MCF 10A (cell line): ENCODE measurements at regions of chr12 and their contacts with region 1.

Region 1: DNA sequence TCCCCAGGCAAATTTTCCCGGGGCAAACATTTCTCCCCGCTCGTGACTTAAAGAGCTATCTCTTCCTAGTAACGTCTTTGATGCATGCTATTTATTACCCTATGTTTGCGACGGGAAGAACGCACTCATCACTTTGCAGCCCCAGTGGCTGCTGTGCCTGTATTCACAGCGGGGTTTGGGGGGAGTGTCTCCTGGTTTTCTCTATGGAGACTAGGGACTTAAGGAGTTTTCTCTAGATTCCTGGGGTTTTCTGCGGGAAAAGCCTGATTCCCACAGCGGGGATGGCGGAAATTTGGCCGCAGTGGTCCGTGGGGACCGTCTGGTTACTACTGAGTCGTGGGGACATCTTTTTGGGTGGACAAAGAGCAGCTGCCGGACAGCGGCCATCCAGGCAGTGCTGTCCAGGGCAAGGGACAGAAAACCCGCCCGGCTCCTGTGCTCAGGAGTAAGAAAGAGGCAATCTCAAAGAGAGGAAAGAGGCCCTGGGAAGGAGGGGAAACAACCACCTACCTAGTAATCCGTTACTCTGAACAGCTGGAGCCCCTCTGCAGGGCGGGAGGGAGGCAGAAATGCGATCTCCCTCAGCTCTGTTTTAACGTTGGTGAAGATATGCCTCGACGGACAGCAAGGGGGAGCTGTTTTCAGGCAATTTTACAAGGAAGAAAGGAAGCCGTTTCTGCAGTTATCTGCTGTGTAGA is 771 bp upstream of the AVPR1A start:
- DNase-seq: peak; percentile 51
- H3K4me3 Mint-ChIP-seq: peak overlapping the region; percentile 6
- H3K27ac Mint-ChIP-seq: no peak overlapping the region
- H3K4me1 Mint-ChIP-seq: peaks cover 12% of the 10 kb centered on the region
- H3K27me3 Mint-ChIP-seq: peaks cover 98% of the 10 kb centered on the region
- CTCF ChIP-seq: peak; percentile 71

Region 2: GRCh38 chr12:63124778-63125177 is 27.0 kb before region 1 on chr12:
- CTCF ChIA-PET with region 1: interaction called, 11 read pairs
- POLR2A ChIA-PET with region 1: no interaction called
- intact Hi-C with region 1: no loop called
- DNase-seq: peak; percentile 11
- H3K4me3 Mint-ChIP-seq: no peak overlapping the region
- H3K27ac Mint-ChIP-seq: no peak overlapping the region
- H3K4me1 Mint-ChIP-seq: no peaks in the 10 kb centered on the region
- H3K27me3 Mint-ChIP-seq: peaks cover 71% of the 10 kb centered on the region
- CTCF ChIP-seq: no peak

Region 3: DNA sequence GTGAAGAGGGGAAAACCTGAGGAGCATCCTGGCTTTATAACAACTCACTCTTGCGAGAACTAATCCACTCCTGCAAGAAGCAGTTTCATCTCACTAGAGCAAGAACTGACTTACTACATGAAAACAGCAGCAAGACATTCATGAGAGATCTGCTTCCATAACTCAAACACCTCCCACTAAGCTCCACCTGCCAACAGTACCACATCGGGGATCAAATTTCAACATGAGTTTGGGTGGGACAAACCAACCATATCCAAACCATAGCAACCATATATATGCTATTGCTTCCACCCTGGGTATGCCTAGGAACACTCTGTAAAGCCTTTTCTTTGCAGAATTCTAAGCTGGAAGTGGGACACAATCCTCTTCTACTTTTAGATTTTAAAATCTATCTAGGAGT is 13.1 kb after region 1 on chr12:
- CTCF ChIA-PET with region 1: interaction called, 11 read pairs
- POLR2A ChIA-PET with region 1: interaction called, 5 read pairs
- intact Hi-C with region 1: no loop called
- DNase-seq: no peak
- H3K4me3 Mint-ChIP-seq: no peak overlapping the region
- H3K27ac Mint-ChIP-seq: no peak overlapping the region
- H3K4me1 Mint-ChIP-seq: peaks cover 5% of the 10 kb centered on the region
- H3K27me3 Mint-ChIP-seq: peaks cover 82% of the 10 kb centered on the region
- CTCF ChIP-seq: no peak

Region 4: DNA sequence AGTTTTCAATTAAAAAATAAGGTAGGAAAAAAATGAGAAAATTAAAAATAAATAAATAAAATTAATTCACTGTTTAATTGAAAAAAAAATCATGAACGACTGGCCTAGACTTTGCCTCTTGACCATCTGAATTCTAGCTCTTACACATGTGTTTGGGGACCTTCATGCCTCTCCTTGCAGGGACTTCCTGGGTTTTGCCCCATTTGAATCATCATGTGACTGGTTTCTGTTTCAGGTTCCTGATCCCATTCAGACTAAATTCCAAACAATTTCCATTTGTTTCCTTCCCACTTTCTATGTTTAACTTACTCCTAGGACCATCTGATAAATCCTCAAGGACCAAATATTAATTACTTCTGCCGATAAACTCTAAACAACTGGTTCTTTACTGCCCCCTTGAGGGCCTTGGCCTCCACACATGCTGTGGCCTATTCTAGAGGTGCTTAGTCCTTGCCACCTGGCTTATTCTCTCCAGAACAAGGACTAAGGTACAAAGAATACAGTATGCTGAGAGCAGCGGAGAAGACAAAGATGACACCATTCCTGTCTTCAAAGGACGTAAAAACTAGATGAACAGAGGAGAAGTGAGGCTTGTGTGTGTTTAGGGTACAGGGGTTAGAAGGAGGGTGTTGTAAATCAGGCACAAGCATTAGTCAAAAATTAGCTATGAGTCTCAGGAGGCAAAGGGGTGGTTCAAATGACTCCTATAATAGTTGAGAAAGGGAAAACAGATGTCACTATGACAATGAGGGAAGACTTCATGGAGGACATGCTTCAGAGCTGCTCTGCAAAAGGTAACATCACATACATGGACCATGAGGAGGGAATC is 125.0 kb after region 1 on chr12:
- CTCF ChIA-PET with region 1: interaction called, 25 read pairs
- POLR2A ChIA-PET with region 1: no interaction called
- intact Hi-C with region 1: loop called (anchors 1 kb)
- DNase-seq: peak; percentile 67
- H3K4me3 Mint-ChIP-seq: no peak overlapping the region
- H3K27ac Mint-ChIP-seq: no peak overlapping the region
- H3K4me1 Mint-ChIP-seq: no peaks in the 10 kb centered on the region
- H3K27me3 Mint-ChIP-seq: peaks cover 64% of the 10 kb centered on the region
- CTCF ChIP-seq: peak; percentile 83

Region 5: GRCh38 chr12:63319336-63319735 is 167.6 kb after region 1 on chr12:
- CTCF ChIA-PET with region 1: no interaction called
- POLR2A ChIA-PET with region 1: interaction called, 10 read pairs
- intact Hi-C with region 1: no loop called
- DNase-seq: peak; percentile 66
- H3K4me3 Mint-ChIP-seq: no peak overlapping the region
- H3K27ac Mint-ChIP-seq: no peak overlapping the region
- H3K4me1 Mint-ChIP-seq: peaks cover 12% of the 10 kb centered on the region
- H3K27me3 Mint-ChIP-seq: peaks cover 4% of the 10 kb centered on the region
- CTCF ChIP-seq: no peak

Region 6: DNA sequence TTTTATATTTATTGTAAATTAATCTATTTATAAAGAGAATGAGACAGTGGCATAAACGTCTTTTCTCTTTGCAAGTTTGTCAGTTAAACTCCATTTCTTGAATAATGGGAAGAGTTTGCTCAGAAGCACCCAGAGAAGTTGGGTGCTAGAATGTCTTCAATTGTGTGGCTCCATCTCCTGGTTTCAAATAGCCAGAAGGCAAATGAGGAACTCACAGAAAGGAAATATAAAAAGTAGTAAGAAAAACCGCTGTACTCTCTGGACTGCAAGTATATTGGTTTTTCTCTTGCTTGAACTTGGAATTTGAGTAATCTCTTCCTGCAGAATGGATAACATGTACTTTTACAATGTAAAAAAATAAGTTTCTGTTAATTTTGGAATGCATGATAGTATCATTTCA is 299.0 kb after region 1 on chr12:
- CTCF ChIA-PET with region 1: no interaction called
- POLR2A ChIA-PET with region 1: no interaction called
- intact Hi-C with region 1: loop called (anchors 5 kb)
- DNase-seq: no peak
- H3K4me3 Mint-ChIP-seq: no peak overlapping the region
- H3K27ac Mint-ChIP-seq: no peak overlapping the region
- H3K4me1 Mint-ChIP-seq: no peaks in the 10 kb centered on the region
- H3K27me3 Mint-ChIP-seq: peaks cover 36% of the 10 kb centered on the region
- CTCF ChIP-seq: no peak